ENCODE measurements at regions of chr12 and their contacts with region 1.

Region 1: DNA sequence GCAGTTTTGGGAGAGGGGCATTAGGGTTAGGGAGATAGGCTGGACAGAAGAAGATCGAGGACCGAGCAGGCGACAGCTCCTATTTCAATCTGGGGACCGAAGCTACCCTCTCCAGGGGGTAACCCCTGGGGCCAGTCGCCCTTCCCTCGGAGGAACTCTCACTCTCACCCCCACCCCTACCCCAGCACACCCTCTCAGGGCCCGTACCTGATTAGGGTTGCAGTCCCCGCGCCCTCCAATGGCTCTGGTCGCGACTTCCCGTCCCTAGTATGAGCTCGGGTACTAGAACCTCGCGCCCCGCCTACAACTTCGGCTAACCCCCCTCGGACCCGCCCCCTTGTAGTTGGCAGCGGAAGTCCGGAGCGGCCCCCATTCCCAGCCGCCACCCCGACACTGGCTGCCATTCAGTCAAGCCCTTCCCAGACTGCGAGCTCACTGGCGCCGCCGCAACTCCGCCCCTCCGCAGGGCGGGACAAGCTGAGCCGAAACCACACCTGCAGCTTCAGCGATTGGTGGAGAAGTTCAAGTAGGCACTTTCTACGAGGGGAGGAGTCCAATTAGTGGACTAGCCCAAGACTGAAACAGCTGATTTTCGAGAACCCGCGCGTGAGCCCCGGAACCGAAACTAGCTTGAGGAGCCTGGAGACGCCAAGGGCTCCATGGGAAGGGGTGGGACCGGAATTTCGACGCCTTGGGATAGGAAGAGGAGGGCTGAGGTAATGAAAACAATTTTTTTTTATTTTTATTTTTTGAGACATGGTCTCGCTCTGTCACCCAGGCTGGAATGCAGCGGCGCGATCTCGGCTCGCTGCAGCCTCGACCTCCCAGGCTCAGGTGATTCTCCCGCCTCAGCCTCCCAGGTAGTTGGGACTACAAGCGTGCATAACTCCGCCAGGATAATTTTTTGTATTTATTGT is at the start of gene STAT2:
- DNase-seq: peak; percentile 98
- ATAC-seq: peak; percentile 93
- H3K4me3 ChIP-seq: peak within 1 kb of the TSS; percentile 83 to 94 (median 87)
- H3K27ac ChIP-seq: peak within 1 kb of the TSS; percentile 83
- H3K4me1 ChIP-seq: peaks cover 72% of the 10 kb centered on the region
- H3K27me3 ChIP-seq: no peaks in the 10 kb centered on the region
- CTCF ChIP-seq: no peak
- EP300 ChIP-seq: peak; percentile 11 to 65; a peak in 2 of 4 replicates
- POLR2A ChIP-seq: peak; percentile 41 to 78; a peak in 3 of 4 replicates
- RAD21 ChIP-seq: peak; percentile 19; the same call in 1 of the 2 replicates
- total RNA-seq, gene STAT2: 41.6 and 43.5 TPM in 2 replicates

Region 2: GRCh38 chr12:56299853-56300643 is 60.1 kb before region 1 on chr12 and contains the start of gene CS:
- CTCF ChIA-PET with region 1: no interaction called
- POLR2A ChIA-PET with region 1: no interaction called
- in situ Hi-C with region 1: no loop called
- intact Hi-C with region 1: no loop called
- DNase-seq: peak; percentile 96
- ATAC-seq: peak; percentile 87
- H3K4me3 ChIP-seq: peak within 1 kb of the TSS; percentile 76 to 97 (median 94)
- H3K27ac ChIP-seq: peak within 1 kb of the TSS; percentile 96
- H3K4me1 ChIP-seq: peaks cover 65% of the 10 kb centered on the region
- H3K27me3 ChIP-seq: no peaks in the 10 kb centered on the region; a peak in 1 of 5 replicates
- CTCF ChIP-seq: 0 out of 2 replicates have a peak, but pooled peaks have one; percentile 7
- EP300 ChIP-seq: 0 out of 4 replicates have a peak, but pooled peaks of 1 of the 2 experiments have one; percentile 26
- POLR2A ChIP-seq: peak; percentile 54 to 70
- RAD21 ChIP-seq: peak; percentile 59
- total RNA-seq, gene CS: 175 and 243 TPM in 2 replicates

Region 3: DNA sequence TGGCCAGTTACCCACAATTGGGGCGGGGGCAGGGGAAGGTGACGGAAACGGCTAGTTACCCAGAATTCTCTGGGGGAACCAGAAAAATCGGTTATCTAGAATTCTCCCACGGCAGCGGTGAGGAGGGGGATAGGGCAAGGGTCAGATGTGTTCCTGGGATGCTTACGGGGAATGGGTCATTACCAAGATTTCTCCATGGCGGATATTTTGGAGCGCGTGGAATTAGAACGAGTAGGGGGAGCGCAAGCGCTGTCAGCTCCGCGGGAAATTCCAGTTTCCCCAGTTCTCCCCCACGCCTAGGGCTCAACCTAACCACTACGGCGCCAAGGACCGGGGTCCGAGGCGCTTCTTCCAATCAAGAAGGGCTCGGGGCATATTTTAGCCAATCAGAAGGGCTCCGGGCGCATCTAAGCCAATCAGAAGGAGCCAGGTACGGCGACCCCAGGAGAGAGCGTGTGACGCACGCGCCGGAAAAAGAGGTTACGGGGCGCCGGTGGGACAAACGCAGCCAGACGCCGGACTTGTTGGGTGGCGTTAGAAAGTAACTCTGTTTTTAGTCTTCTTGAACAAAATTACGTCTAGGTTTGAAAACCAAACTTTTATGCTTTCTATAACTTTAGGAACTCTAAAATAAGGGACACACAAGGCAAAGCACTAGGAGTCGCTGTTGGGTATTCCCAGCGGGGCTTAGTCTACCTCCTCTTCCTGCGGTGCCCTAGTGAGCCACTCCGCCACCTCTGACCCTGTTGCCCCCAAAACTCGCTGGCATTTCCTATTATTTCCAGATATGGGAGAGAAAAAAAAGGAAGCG is 26.2 kb before region 1 on chr12 and contains the start of gene PAN2:
- CTCF ChIA-PET with region 1: no interaction called
- POLR2A ChIA-PET with region 1: interaction called, 81 read pairs
- in situ Hi-C with region 1: no loop called
- intact Hi-C with region 1: no loop called
- DNase-seq: peak; percentile 96
- ATAC-seq: peak; percentile 99
- H3K4me3 ChIP-seq: peak within 1 kb of the TSS; percentile 60 to 74 (median 71)
- H3K27ac ChIP-seq: peak within 1 kb of the TSS; percentile 88
- H3K4me1 ChIP-seq: peaks cover 48% of the 10 kb centered on the region
- H3K27me3 ChIP-seq: no peaks in the 10 kb centered on the region; a peak in 1 of 5 replicates
- CTCF ChIP-seq: no peak; the same call in 1 of the 2 replicates
- EP300 ChIP-seq: no peak
- POLR2A ChIP-seq: peak; percentile 72 to 74
- RAD21 ChIP-seq: peak; percentile 67; the same call in 1 of the 2 replicates
- total RNA-seq, gene PAN2: 14.8 and 27.2 TPM in 2 replicates

Region 4: DNA sequence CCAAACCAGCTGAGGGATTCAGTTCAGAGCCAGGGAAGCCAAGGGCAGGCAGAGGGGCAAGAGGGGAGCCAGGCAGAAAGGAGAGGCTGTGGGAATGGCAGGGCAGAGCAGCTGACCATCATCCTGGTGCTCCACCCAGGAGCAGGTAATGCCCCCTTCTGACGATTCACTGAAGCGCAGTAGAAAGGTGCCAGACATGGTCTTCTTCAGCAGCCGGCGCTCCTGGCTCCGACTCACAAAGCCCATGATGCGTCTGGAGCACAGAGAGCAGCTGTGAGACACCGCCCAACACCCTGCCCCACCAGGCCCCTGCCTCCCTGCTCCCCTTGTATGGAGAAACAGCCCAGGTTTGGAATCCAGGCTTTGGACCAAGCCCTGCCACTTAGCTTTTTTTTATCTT is 13.4 kb before region 1 on chr12:
- CTCF ChIA-PET with region 1: no interaction called
- POLR2A ChIA-PET with region 1: interaction called, 47 read pairs
- in situ Hi-C with region 1: no loop called
- intact Hi-C with region 1: no loop called
- DNase-seq: no peak
- ATAC-seq: peak; percentile 44
- H3K4me3 ChIP-seq: no peak overlapping the region
- H3K27ac ChIP-seq: no peak overlapping the region
- H3K4me1 ChIP-seq: peaks cover 4% of the 10 kb centered on the region
- H3K27me3 ChIP-seq: no peaks in the 10 kb centered on the region
- CTCF ChIP-seq: peak; percentile 49
- EP300 ChIP-seq: no peak
- POLR2A ChIP-seq: no peak
- RAD21 ChIP-seq: no peak

Region 5: GRCh38 chr12:56448860-56449621 is 88.9 kb after region 1 on chr12 and contains the start of gene TIMELESS:
- CTCF ChIA-PET with region 1: no interaction called
- POLR2A ChIA-PET with region 1: interaction called, 53 read pairs
- in situ Hi-C with region 1: no loop called
- intact Hi-C with region 1: loop called (anchors 1 kb)
- DNase-seq: peak; percentile 82
- ATAC-seq: peak; percentile 96
- H3K4me3 ChIP-seq: peak within 1 kb of the TSS; percentile 68 to 96 (median 77)
- H3K27ac ChIP-seq: peak within 1 kb of the TSS; percentile 92
- H3K4me1 ChIP-seq: peaks cover 24% of the 10 kb centered on the region
- H3K27me3 ChIP-seq: no peaks in the 10 kb centered on the region
- CTCF ChIP-seq: peak; percentile 45
- EP300 ChIP-seq: no peak
- POLR2A ChIP-seq: peak; percentile 61 to 82
- RAD21 ChIP-seq: peak; percentile 47
- total RNA-seq, gene TIMELESS: 20.3 and 25.6 TPM in 2 replicates

Region 6: GRCh38 chr12:56468216-56469006 is 108.3 kb after region 1 on chr12 and contains the start of gene SPRYD4:
- CTCF ChIA-PET with region 1: no interaction called
- POLR2A ChIA-PET with region 1: interaction called, 8 read pairs
- in situ Hi-C with region 1: no loop called
- intact Hi-C with region 1: loop called (anchors 2 kb)
- DNase-seq: peak; percentile 82
- ATAC-seq: peak; percentile 92
- H3K4me3 ChIP-seq: peak within 1 kb of the TSS; percentile 79 to 93 (median 80)
- H3K27ac ChIP-seq: peak within 1 kb of the TSS; percentile 86
- H3K4me1 ChIP-seq: peaks cover 23% of the 10 kb centered on the region
- H3K27me3 ChIP-seq: no peaks in the 10 kb centered on the region; a peak in 1 of 5 replicates
- CTCF ChIP-seq: peak; percentile 90
- EP300 ChIP-seq: 0 out of 4 replicates have a peak, but pooled peaks of 1 of the 2 experiments have one; percentile 9
- POLR2A ChIP-seq: peak; percentile 90
- RAD21 ChIP-seq: peak; percentile 54; the same call in 1 of the 2 replicates
- total RNA-seq, gene SPRYD4: 4.1 and 4.5 TPM in 2 replicates

Region 7: GRCh38 chr12:56645717-56646446 is 285.8 kb after region 1 on chr12 and contains the start of gene ATP5F1B:
- CTCF ChIA-PET with region 1: no interaction called
- POLR2A ChIA-PET with region 1: no interaction called
- in situ Hi-C with region 1: no loop called
- intact Hi-C with region 1: no loop called
- DNase-seq: peak; percentile 100
- ATAC-seq: peak; percentile 99
- H3K4me3 ChIP-seq: peak within 1 kb of the TSS; percentile 75 to 89 (median 77)
- H3K27ac ChIP-seq: peak within 1 kb of the TSS; percentile 84
- H3K4me1 ChIP-seq: peaks cover 35% of the 10 kb centered on the region
- H3K27me3 ChIP-seq: no peaks in the 10 kb centered on the region; a peak in 1 of 5 replicates
- CTCF ChIP-seq: no peak
- EP300 ChIP-seq: no peak
- POLR2A ChIP-seq: peak; percentile 99
- RAD21 ChIP-seq: no peak; the same call in 1 of the 2 replicates
- total RNA-seq, gene ATP5F1B: 1,051 and 1,399 TPM in 2 replicates

Measured in HepG2 (cell line).